ENCODE measurements at regions of chr3 and their contacts with region 1.

Region 1: GRCh38 chr3:46998121-46998851 is 18.8 kb downstream of the NBEAL2 start:
- H3K4me3 ChIP-seq: no peak overlapping the region
- H3K27ac ChIP-seq: no peak overlapping the region
- H3K4me1 ChIP-seq: no peaks in the 10 kb centered on the region
- CTCF ChIP-seq: peak; percentile 66

Region 2: GRCh38 chr3:46923559-46924350 is 74.5 kb before region 1 on chr3:
- CTCF ChIA-PET with region 1: interaction called, 15 read pairs
- POLR2A ChIA-PET with region 1: no interaction called
- H3K4me3 ChIP-seq: no peak overlapping the region
- H3K27ac ChIP-seq: no peak overlapping the region
- H3K4me1 ChIP-seq: no peaks in the 10 kb centered on the region
- CTCF ChIP-seq: peak; percentile 37

Region 3: GRCh38 chr3:47536221-47536891 is 538.1 kb after region 1 on chr3:
- CTCF ChIA-PET with region 1: no interaction called
- POLR2A ChIA-PET with region 1: no interaction called
- H3K4me3 ChIP-seq: no peak overlapping the region
- H3K27ac ChIP-seq: no peak overlapping the region
- H3K4me1 ChIP-seq: no peaks in the 10 kb centered on the region
- CTCF ChIP-seq: no peak

Measured in HEK293 (cell line).